Calu3 (cell line): ENCODE measurements at regions of chr20 and their contacts with region 1.

Region 1: DNA sequence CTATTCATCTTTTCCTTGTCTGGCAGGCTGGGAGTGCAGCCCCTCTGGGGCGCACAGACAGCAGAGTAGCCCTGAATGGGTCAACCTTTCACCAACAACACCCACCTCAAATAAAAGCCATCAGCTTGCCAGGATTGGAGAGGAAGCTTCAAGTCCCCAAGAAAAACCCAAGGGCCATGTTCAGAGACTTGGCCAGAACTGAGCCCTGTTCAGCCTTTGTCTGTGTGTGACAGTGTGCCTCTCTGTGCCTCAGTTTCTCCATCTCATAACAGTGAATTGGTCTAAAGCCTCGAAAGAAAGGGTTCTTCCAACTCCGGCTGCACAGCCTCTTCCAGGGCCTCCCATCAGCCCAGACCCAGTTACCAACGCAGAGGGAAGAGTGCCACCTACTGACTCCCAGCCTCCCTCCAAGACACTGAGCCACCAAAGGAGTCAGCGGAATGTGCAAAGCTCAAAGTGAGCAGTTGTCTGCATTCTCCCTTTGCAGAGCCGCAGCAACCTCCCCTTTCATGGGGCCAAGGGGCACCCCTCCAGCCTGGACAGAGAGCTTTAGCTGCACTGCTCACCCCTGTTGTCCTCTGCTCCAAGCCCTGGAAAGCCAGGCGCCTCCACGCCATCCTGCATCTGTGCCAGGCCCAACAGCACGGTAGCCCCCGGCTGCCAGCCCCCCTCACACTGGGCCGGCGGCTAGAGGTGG is 82.7 kb upstream of the TOP1 start:
- DNase-seq: peak; percentile 62
- H3K4me3 Mint-ChIP-seq: no peak overlapping the region
- H3K27ac Mint-ChIP-seq: no peak overlapping the region
- H3K4me1 Mint-ChIP-seq: no peaks in the 10 kb centered on the region
- H3K27me3 Mint-ChIP-seq: peaks cover 66% of the 10 kb centered on the region
- CTCF ChIP-seq: no peak

Region 2: DNA sequence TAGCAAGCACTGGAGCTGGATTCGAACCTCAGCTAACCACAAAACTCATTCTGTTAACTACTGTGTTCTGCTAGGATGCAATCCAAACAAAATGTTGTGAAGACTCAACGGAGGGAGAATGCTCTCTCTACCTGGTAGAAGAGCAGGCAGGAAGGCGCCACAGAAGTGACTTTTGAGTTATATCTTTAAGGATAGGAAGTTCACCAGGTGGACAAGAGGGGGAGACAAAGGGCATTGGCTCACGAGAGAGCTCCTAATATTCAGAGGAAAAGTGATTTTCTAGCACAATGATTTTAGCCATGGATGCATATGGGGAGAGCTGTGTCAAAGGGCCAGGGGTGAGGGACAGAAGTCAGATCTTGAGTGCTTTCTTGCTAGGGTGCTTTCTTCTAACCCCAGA is 148.5 kb before region 1 on chr20:
- CTCF ChIA-PET with region 1: interaction called, 4 read pairs
- intact Hi-C with region 1: loop called (anchors 5 kb)
- DNase-seq: peak; percentile 33
- H3K4me3 Mint-ChIP-seq: no peak overlapping the region
- H3K27ac Mint-ChIP-seq: no peak overlapping the region
- H3K4me1 Mint-ChIP-seq: no peaks in the 10 kb centered on the region
- H3K27me3 Mint-ChIP-seq: peaks cover 71% of the 10 kb centered on the region
- CTCF ChIP-seq: peak; percentile 68

Region 3: GRCh38 chr20:40868551-40869217 is 77.2 kb before region 1 on chr20:
- CTCF ChIA-PET with region 1: no interaction called
- intact Hi-C with region 1: no loop called
- DNase-seq: no peak
- H3K4me3 Mint-ChIP-seq: no peak overlapping the region
- H3K27ac Mint-ChIP-seq: no peak overlapping the region
- H3K4me1 Mint-ChIP-seq: no peaks in the 10 kb centered on the region
- H3K27me3 Mint-ChIP-seq: peaks cover 77% of the 10 kb centered on the region
- CTCF ChIP-seq: no peak